ENCODE measurements at regions of chr17 and their contacts with region 1.

Region 1: DNA sequence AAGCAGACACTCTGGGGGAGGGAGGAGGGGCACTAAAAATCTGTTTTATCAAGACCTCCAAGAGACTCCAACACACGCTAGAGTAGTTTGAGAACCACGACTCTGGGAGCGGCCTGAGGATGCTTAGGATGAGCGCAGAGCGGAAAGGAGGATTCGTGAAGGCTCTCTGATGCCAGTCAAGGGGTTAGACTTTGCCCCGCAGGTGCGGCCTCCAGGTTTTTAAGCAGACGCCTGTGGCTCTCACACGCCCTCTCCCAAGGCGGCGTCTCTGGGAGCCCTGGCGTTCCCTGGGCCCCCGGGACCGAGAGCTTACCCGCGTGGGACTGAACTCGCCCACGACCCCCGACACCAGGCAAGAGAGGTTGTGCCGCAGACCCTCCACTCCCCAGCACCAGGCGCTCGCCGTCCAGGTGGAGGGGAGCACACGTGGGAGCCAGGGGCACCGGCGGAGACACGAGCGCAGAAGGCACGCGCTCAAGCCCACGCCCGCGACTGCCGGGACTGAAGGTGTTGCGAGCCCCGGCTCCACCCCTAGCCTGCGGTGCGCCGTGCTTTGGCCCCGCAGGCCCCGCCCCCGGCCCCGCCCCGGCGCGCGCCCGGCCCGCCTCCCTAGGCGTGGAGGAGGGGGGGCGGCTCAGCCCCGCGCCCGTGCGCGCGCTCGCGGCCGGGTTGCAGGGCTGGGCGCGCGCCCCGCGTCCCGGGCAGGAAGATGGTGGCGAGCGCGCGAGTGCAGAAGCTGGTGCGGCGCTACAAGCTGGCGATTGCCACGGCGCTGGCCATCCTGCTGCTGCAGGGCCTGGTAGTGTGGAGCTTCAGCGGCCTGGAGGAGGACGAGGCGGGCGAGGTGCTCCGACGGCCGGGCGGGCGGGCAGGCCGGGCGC is at the start of gene XYLT2:
- DNase-seq: peak; percentile 95
- ATAC-seq: peak; percentile 91
- H3K4me3 Mint-ChIP-seq: peak within 1 kb of the TSS; percentile 90
- H3K27ac Mint-ChIP-seq: peak within 1 kb of the TSS; percentile 94
- H3K4me1 Mint-ChIP-seq: peaks cover 32% of the 10 kb centered on the region
- H3K27me3 Mint-ChIP-seq: no peaks in the 10 kb centered on the region
- total RNA-seq, gene XYLT2: 29.8 to 30.4 TPM

Region 2: GRCh38 chr17:49996495-49997268 is 349.0 kb before region 1 on chr17:
- CTCF ChIA-PET with region 1: no interaction called
- POLR2A ChIA-PET with region 1: no interaction called
- intact Hi-C with region 1: no loop called
- DNase-seq: peak; percentile 80
- ATAC-seq: peak; percentile 37
- H3K4me3 Mint-ChIP-seq: peak overlapping the region; percentile 37
- H3K27ac Mint-ChIP-seq: no peak overlapping the region
- H3K4me1 Mint-ChIP-seq: peaks cover 23% of the 10 kb centered on the region
- H3K27me3 Mint-ChIP-seq: peaks cover 59% of the 10 kb centered on the region

Region 3: DNA sequence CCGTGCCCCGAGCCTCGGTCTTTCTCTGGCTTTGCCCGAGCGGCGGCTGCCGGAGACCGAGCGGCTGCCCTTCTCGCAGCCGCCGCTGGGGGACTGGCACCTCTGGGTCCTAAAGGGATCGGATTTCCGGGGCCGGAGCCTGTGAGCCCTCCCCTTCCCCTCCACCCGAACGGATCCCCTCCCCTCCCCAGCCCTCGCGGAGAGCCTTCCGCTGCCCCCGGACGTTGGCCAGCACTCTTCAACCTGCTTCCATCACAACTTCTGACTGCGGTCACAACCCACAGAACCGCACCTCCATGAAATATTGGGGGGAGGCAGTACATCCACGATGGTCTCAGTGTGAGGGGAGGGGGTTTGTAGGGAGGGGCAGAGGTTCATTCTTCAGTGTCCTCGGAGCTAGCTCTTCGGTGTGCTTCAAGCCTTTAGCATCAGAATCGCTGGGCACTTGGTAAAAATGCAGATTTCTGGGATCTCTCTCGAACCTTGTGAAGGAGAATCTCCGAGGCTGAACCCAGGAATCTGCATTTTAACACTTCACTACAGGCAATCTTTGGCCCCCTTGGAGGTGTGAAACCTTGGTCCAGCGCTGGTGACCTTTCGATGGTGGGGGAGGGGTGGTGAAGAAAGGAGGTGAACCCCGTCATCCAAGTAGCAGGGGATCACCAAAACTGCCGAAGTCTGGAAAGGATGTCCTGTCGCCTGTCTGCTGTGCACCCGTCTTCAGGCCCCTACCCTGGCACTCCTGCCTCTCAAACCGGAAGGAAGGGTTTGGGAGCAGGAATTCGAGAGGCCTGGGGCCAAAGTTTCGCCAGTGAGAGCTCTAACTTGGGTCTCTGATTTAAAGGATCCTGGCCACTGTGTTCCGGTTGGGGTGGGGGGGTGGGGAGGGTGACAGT is 194.4 kb before region 1 on chr17:
- CTCF ChIA-PET with region 1: no interaction called
- POLR2A ChIA-PET with region 1: no interaction called
- intact Hi-C with region 1: loop called in 1 of 2 experiments (anchors 1 kb)
- DNase-seq: peak; percentile 95
- ATAC-seq: peak; percentile 66
- H3K4me3 Mint-ChIP-seq: peak overlapping the region; percentile 90
- H3K27ac Mint-ChIP-seq: peak overlapping the region; percentile 96
- H3K4me1 Mint-ChIP-seq: peaks cover 40% of the 10 kb centered on the region
- H3K27me3 Mint-ChIP-seq: no peaks in the 10 kb centered on the region

Region 4: GRCh38 chr17:50319305-50320004 is 26.2 kb before region 1 on chr17:
- CTCF ChIA-PET with region 1: interaction called, 3 read pairs
- POLR2A ChIA-PET with region 1: no interaction called
- intact Hi-C with region 1: loop called in 1 of 2 experiments (anchors 2 kb)
- DNase-seq: no peak
- ATAC-seq: no peak
- H3K4me3 Mint-ChIP-seq: no peak overlapping the region
- H3K27ac Mint-ChIP-seq: no peak overlapping the region
- H3K4me1 Mint-ChIP-seq: no peaks in the 10 kb centered on the region
- H3K27me3 Mint-ChIP-seq: no peaks in the 10 kb centered on the region

Region 5: GRCh38 chr17:50361561-50362480 is 16.1 kb after region 1 on chr17:
- CTCF ChIA-PET with region 1: interaction called, 23 read pairs
- POLR2A ChIA-PET with region 1: no interaction called
- intact Hi-C with region 1: no loop called
- DNase-seq: peak; percentile 76
- ATAC-seq: peak; percentile 95
- H3K4me3 Mint-ChIP-seq: no peak overlapping the region
- H3K27ac Mint-ChIP-seq: peak overlapping the region; percentile 80
- H3K4me1 Mint-ChIP-seq: peaks cover 8% of the 10 kb centered on the region
- H3K27me3 Mint-ChIP-seq: no peaks in the 10 kb centered on the region

Region 6: DNA sequence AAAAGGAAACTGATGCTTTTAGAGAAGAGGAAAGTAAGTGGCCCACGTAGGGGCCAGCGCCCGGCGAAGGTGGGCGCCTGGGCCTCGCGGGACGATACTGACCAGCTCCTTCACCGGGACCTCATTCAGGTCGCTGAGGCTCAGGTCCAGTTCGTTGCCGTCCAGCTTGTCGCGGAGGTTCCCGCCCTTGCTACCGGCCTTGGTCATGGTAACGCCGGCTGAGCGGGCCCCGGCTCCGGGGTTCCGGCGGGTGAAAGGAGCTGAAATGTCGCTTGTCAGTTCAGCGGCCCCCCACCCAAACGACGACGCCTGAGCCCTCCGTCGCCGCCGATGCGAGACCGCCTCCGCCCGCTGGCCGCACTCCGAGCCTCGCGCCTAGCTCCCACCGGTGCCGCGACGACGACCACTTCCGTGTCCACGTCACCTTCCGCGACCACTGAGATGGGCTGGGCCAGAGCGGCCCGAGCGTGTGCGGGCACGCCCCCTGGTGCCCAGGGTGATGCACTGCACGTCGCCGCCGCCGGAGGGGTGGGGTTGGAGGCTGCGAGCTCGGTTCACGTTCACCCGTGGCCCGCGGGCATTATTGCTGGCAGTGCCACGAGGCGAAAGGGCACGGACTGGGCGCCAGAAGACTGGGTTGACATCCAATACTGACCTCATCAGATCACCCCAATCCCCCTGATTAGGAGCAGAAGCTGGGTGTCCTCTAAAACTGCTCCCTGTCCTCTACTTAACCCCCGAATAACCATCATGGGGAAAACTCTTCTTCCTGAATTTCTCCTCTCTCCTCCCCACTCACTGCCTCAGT is 51.6 kb after region 1 on chr17 and contains the start of gene LRRC59:
- CTCF ChIA-PET with region 1: interaction called, 4 read pairs
- POLR2A ChIA-PET with region 1: interaction called, 4 read pairs
- intact Hi-C with region 1: loop called in 1 of 2 experiments (anchors 1 kb)
- DNase-seq: peak; percentile 95
- ATAC-seq: peak; percentile 95
- H3K4me3 Mint-ChIP-seq: peak within 1 kb of the TSS; percentile 93
- H3K27ac Mint-ChIP-seq: peak within 1 kb of the TSS; percentile 88
- H3K4me1 Mint-ChIP-seq: peaks cover 33% of the 10 kb centered on the region
- H3K27me3 Mint-ChIP-seq: no peaks in the 10 kb centered on the region
- total RNA-seq, gene LRRC59: 74.4 to 82.7 TPM

Measured in activated CD4-positive, alpha-beta T cell treated with anti-CD3 and anti-CD28 coated beads for 36 hours (primary cell).